Left ventricle myocardium inferior (tissue), 1 donor: ENCODE measurements at regions of chr14 and their contacts with region 1.

Region 1: GRCh38 chr14:65824285-65824977 is 411.9 kb downstream of the FUT8 start:
- DNase-seq: no peak
- H3K4me3 ChIP-seq: no peak overlapping the region
- H3K27ac ChIP-seq: no peak overlapping the region
- H3K4me1 ChIP-seq: no peaks in the 10 kb centered on the region
- H3K27me3 ChIP-seq: peaks cover 80% of the 10 kb centered on the region
- CTCF ChIP-seq: peak; percentile 95

Region 2: DNA sequence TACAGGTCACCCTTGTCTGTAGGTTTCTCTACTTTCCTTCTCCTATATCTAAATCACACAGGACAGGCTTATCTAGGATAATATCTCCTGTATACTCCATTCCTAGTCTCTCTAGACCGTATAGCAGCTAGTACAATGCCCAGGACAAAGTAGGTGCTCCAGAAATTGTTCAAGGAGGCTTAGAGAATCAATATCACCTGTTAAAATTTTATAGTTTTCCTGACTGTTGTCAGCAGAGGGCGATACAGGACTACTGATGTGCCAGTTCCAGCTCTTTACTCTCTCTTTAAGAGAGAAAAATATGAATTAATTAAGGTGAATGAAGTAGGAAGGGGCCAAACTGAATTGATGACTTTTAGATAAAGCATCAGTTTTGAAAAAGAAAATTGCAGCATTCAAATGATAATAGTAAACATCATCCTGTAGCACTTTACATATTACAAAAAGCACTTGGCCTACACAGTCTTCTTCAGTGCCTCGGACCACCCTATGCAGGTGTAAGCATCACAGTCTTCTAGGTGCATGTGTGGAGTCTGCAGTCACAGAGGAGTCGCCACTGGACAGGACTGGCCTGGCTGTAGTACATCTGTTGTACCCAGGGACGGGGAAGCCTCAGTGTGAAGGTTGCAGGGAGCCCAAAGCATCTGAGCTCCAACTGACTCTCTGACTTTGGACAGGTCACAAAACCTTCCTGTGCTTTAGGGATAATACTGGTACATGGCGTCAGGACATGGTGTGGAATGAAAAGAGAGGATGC is 660.2 kb before region 1 on chr14:
- intact Hi-C with region 1: loop called (anchors 10 kb)
- DNase-seq: no peak
- H3K4me3 ChIP-seq: no peak overlapping the region
- H3K27ac ChIP-seq: no peak overlapping the region
- H3K4me1 ChIP-seq: peaks cover 3% of the 10 kb centered on the region
- H3K27me3 ChIP-seq: peaks cover 2% of the 10 kb centered on the region
- CTCF ChIP-seq: peak; percentile 76

Region 3: DNA sequence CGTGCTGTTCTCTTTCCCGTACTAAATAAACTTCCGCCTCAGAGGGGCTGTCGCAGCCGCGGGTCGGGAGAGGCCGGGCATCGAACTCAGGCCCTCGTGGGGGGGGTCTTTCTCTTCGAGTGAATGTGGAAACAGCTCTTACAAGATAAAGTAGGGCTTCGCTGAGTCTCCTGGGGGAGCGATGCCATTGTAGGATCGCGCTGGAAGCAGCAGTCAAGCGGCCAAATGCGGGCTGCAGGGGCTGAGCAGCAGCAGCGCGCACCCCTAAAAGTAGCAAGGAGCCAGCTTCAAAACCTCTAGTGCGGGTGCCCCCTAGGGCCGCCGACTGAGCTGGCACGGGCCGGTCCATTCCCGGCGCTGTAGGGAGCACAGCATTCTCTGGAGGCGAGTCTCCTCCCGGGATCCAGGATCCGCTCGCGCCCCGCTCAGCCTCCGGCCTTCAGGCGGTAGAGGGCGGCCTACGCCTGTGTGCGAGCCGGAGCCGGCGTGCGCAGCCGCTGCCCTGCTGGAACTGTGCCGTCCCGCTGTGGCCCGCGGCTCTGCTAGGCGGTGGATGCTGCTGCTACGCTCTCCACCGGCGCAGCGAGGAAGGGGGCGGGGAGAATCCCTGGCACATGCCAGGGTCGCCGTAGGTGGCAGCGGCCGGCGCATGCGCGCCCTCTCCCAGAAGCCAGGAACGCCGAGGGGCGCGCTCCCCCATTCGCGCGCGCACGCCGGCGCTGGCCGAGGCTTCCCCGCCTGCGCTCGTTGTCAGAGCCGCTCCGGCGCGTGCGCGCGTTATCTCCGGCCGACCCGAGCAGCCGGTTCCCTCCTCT is 412.2 kb before region 1 on chr14 and contains the start of gene FUT8:
- intact Hi-C with region 1: loop called (anchors 5 kb)
- DNase-seq: peak; percentile 94
- H3K4me3 ChIP-seq: peak within 1 kb of the TSS; percentile 91
- H3K27ac ChIP-seq: peak within 1 kb of the TSS; percentile 97
- H3K4me1 ChIP-seq: peaks cover 36% of the 10 kb centered on the region
- H3K27me3 ChIP-seq: no peaks in the 10 kb centered on the region
- CTCF ChIP-seq: peak; percentile 72
- total RNA-seq, gene FUT8: 7.8 TPM

Region 4: GRCh38 chr14:65769151-65769550 is 55.3 kb before region 1 on chr14:
- intact Hi-C with region 1: no loop called
- DNase-seq: no peak
- H3K4me3 ChIP-seq: no peak overlapping the region
- H3K27ac ChIP-seq: no peak overlapping the region
- H3K4me1 ChIP-seq: no peaks in the 10 kb centered on the region
- H3K27me3 ChIP-seq: peaks cover 17% of the 10 kb centered on the region
- CTCF ChIP-seq: no peak